Activated T-helper 2 cell treated with anti-CD3 and anti-CD28 coated beads, Interferon-gamma antibody, Interleukin-2, Interleukin-4, amounts not matched to agents 10 μg/mL and 5 μg/mL and 100 μg/mL, durations not matched to agents 14 hours and 24 hours and 36 hours (primary cell): ENCODE measurements at regions of chr7 and their contacts with region 1.

Region 1: GRCh38 chr7:142811154-142811737 is 40.5 kb downstream of the PRSS2 start:
- DNase-seq: no peak
- H3K4me3 Mint-ChIP-seq: peak overlapping the region; percentile 76
- H3K27ac Mint-ChIP-seq: peak overlapping the region; percentile 92
- H3K4me1 Mint-ChIP-seq: peaks cover 68% of the 10 kb centered on the region
- H3K27me3 Mint-ChIP-seq: peaks cover 7% of the 10 kb centered on the region

Region 2: DNA sequence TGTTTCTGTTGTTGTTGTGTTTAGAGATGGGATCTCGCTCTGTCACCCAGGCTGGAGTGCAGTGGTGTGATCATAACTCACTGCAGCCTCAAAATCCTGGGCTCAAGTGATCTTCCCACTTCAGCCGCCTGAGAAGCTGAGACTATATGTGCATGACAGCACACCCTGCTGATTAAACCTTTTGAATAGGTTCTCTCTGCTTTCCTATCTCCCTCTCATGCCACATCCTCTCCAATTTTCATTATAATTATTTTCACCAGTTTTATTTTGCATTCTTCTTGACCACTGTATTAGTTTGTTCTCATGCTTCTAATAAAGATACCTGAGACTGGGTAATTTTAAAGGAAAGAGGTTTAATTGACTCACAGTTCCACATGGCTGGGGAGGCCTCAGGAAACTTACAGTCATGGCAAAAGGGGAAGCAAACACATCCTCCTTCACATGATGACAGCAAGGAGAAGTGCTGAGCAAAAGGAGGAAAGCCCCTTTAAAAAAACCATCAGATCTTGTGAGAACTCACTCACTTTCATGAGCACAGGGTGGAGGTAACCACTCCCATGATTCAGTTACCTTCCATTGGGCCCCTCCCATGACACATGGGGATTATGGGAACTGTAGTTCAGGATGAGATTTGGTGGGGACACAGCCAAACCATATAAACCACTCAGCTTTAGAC is 1247.2 kb before region 1 on chr7:
- intact Hi-C with region 1: loop called (anchors 2 kb)
- DNase-seq: no peak
- H3K4me3 Mint-ChIP-seq: peak overlapping the region; percentile 9
- H3K27ac Mint-ChIP-seq: peak overlapping the region; percentile 91
- H3K4me1 Mint-ChIP-seq: peaks cover 59% of the 10 kb centered on the region
- H3K27me3 Mint-ChIP-seq: no peaks in the 10 kb centered on the region

Region 3: GRCh38 chr7:142301923-142302550 is 509.2 kb before region 1 on chr7:
- intact Hi-C with region 1: loop called (anchors 1 kb)
- DNase-seq: no peak
- H3K4me3 Mint-ChIP-seq: no peak overlapping the region
- H3K27ac Mint-ChIP-seq: no peak overlapping the region
- H3K4me1 Mint-ChIP-seq: peaks cover 1% of the 10 kb centered on the region
- H3K27me3 Mint-ChIP-seq: peaks cover 24% of the 10 kb centered on the region

Region 4: DNA sequence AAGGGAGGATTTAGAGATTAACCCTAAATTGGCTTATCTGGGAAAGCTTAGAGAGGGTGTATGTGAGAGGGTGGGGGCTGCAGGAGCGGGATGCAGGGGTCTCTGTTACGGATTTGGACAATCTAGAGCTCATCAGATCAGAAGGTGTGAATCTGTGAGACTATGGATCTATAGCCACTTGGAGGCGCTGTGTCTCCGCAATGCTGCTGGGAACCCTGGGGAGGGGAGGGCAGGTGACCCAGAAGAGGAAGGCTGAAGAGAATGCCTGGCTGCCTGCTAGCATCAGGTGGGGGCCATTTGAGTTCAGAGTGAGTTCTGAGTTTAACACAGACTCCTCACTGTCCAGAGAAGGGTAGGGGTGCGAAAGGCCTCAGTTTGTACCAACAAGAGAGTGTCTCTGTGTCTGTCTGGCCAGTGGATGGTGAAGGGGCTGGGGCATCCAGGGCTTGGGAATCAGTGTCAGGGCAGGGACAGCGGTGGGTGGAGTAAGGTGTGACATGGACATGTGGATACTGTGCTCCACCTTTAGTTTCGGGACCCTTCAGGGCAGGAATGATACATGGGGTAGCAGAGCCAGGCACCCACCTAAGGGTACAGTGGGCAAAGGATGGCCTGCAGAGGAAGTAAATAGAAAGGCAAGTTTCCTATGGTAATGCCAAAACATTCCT is 366.1 kb before region 1 on chr7:
- intact Hi-C with region 1: loop called (anchors 1 kb)
- DNase-seq: no peak
- H3K4me3 Mint-ChIP-seq: no peak overlapping the region
- H3K27ac Mint-ChIP-seq: no peak overlapping the region
- H3K4me1 Mint-ChIP-seq: peaks cover 32% of the 10 kb centered on the region
- H3K27me3 Mint-ChIP-seq: peaks cover 6% of the 10 kb centered on the region

Region 5: GRCh38 chr7:142496545-142497041 is 314.7 kb before region 1 on chr7:
- intact Hi-C with region 1: no loop called
- DNase-seq: no peak
- H3K4me3 Mint-ChIP-seq: peak overlapping the region; percentile 17
- H3K27ac Mint-ChIP-seq: no peak overlapping the region
- H3K4me1 Mint-ChIP-seq: peaks cover 25% of the 10 kb centered on the region
- H3K27me3 Mint-ChIP-seq: peaks cover 3% of the 10 kb centered on the region

Region 6: GRCh38 chr7:142612237-142612881 is 198.9 kb before region 1 on chr7:
- intact Hi-C with region 1: loop called (anchors 2 kb)
- DNase-seq: no peak
- H3K4me3 Mint-ChIP-seq: no peak overlapping the region
- H3K27ac Mint-ChIP-seq: peak overlapping the region; percentile 55
- H3K4me1 Mint-ChIP-seq: peaks cover 22% of the 10 kb centered on the region
- H3K27me3 Mint-ChIP-seq: peaks cover 7% of the 10 kb centered on the region

Region 7: DNA sequence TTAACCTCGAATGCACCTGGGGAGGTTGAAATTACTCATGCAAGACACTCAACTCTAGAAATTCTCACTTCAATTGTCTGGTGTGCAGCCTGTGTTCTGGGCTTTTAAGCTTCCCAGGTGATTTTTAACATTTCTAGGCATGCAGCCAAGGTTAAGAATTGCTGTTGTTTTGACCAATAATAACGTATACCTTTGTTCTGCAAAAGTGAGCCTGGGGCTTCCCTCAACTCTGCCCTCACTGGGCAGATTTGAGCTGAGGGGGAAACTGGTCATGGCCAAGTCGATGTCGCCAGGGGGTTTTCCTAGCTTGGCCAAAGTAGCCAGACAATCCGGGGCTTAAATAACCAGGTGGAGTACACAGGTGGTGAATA is 39.9 kb before region 1 on chr7:
- intact Hi-C with region 1: no loop called
- DNase-seq: no peak
- H3K4me3 Mint-ChIP-seq: no peak overlapping the region
- H3K27ac Mint-ChIP-seq: no peak overlapping the region
- H3K4me1 Mint-ChIP-seq: peaks cover 7% of the 10 kb centered on the region
- H3K27me3 Mint-ChIP-seq: peaks cover 2% of the 10 kb centered on the region

Region 8: DNA sequence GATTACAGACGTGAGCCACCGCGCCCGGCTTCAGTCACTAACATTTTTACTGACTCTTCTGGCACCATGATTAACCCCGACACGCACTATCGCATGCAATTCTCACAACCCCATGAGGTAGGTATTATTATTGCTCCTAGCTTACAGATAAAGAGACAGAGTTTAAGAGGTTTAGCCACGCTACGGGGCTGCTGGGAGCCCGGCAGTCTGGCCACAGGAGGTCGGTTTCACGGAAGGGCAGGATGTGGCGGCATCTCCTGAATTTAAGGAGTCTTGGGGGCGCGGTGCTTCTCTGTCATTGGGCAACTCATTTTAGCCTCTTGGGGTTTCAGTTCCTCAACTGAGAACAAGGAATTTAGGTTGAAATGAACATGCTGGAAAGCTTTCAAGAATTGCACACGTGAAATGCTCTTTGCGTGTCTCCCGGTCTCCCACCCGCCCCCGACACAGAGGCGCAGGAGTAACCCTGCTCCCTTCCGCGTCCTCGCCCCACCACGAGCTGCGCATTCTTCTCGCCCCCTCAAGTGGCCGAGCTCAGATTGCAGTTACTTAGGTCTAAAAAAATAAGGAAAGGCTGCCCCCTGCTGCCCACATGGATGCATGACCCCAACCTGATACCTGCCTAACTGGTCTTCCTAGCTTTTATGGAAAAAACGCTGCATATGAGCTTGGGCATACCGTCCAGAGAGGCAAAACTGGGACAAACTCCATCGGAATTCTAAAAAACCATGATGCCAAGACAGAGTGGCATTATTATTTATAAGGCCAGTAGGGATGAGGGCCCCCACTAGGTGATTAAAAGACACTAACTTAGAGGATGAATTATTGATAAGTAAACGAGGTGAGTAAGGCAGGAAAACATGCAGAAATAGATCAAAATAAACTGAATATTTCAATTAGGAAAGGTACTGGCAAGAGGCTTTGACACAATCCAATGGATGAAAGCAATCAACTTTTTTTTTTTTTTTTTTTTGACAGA is 28.0 kb before region 1 on chr7:
- intact Hi-C with region 1: loop called (anchors 1 kb)
- DNase-seq: peak; percentile 65
- H3K4me3 Mint-ChIP-seq: peak overlapping the region; percentile 70
- H3K27ac Mint-ChIP-seq: peak overlapping the region; percentile 85
- H3K4me1 Mint-ChIP-seq: peaks cover 13% of the 10 kb centered on the region
- H3K27me3 Mint-ChIP-seq: no peaks in the 10 kb centered on the region

Region 9: DNA sequence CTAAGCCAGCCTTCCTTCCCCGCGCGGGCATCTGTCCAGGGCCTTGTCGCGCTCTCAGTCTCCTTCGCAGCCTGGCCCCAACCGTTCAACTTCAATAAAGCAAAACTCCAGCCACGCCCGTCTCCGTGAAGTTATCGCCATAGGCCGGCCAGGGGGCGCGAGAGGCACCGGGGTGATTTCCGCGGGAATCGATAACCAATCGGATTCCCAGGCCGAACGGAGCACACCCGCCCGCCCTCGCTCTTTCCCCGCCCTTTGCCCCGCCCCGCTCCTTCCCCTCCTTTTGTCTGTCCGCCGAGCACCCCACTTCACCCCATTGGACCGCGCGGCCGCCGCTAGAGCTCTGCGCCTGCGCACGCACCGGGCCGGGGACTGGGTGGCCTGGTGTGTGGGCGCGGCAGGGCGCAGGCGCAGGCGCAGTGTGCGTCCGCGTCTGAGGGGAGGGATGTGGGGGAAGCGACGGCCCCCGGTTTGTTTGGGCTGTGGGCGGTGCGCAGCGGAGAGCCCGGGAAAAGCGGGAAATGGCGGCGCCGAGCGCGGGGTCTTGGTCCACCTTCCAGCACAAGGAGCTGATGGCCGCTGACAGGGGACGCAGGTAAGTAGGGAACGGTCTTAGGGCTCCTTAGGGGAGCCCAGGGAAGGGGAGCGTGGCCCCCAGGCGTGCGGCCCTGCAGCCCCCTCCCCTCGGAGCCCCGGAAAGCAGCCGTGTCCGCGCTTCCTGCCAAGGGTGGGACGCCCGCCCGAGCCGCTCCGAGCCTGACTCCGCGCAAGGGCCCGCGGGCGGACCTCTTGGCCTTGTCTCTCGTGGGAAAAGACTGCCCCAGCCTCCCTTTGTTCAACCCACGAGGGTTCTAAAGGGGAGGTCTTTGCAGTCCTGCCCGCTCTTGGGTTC is 476.9 kb after region 1 on chr7 and contains the start of gene CASP2:
- intact Hi-C with region 1: loop called (anchors 2 kb)
- DNase-seq: peak; percentile 99
- H3K4me3 Mint-ChIP-seq: peak within 1 kb of the TSS; percentile 95
- H3K27ac Mint-ChIP-seq: peak within 1 kb of the TSS; percentile 87
- H3K4me1 Mint-ChIP-seq: peaks cover 47% of the 10 kb centered on the region
- H3K27me3 Mint-ChIP-seq: no peaks in the 10 kb centered on the region
- total RNA-seq, gene CASP2: 116 and 122 TPM in 2 replicates